Uterus (tissue), 4 donors: ENCODE measurements at regions of chr7 and their contacts with region 1.

Region 1: DNA sequence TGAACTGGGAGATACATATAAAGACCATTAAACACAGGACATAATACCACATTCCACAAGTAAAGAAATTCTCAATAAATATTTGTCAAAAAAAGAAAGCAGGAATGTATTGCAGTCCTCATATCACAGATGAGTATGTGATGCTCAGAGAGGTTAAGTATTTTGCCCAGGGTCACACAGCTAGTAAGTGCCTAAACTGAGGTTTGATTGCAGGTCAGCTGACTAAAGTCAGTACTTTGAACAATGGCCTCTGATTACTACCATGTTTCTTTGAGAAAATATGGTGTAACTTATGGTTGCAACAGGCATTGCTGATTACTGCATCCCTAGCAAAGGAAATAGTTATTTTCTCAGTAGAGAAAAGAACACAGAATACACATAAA is 267.1 kb downstream of the ELMO1 start:
- DNase-seq: no peak
- H3K4me3 ChIP-seq: no peak overlapping the region
- H3K27ac ChIP-seq: no peak overlapping the region
- H3K4me1 ChIP-seq: no peaks in the 10 kb centered on the region
- H3K27me3 ChIP-seq: no peaks in the 10 kb centered on the region
- CTCF ChIP-seq: no peak
- POLR2A ChIP-seq: no peak

Region 2: DNA sequence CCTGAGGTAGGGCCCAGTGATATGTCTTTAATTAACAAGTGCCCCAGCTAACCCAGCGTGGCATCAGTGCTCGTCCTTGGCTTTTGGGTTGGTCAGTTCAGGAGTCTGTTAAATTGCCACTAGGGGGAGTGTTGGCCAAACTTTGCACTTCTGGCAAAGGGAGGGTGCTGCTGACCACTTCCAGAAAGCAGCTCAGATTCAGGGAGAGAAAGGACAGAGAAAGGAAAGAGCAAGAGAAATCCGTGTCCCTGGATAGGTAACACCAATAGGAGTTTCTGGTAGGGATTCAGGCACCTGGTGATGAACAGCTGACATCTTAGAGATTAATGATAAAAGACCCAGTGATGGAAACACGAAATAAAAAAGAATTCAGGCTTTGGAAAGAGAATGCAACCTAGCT is 214.2 kb before region 1 on chr7:
- intact Hi-C with region 1: loop called (anchors 10 kb)
- DNase-seq: peak; percentile 59 to 60
- H3K4me3 ChIP-seq: no peak overlapping the region
- H3K27ac ChIP-seq: no peak overlapping the region
- H3K4me1 ChIP-seq: no peaks in the 10 kb centered on the region
- H3K27me3 ChIP-seq: no peaks in the 10 kb centered on the region
- CTCF ChIP-seq: peak; percentile 71 to 76 (median 74)
- POLR2A ChIP-seq: no peak

Region 3: DNA sequence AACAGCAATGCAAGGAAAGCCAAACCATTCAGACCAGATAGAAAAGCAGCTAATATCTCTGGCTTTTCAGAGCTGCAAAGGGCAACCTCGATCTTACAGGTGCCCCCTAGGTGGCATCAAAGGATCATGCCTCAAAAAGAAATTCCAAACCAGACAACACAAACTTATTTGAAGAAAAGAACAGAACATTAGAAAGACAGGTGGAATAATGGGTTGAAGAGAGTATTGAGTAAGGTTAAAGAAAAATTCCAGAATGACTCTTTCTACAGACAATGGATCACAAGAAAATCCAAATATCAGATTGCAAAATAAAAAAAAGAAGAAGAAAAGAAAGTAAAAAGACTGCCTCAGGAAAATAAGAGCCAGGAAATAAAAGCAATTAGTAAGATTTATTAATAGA is 53.4 kb after region 1 on chr7:
- intact Hi-C with region 1: no loop called
- DNase-seq: no peak
- H3K4me3 ChIP-seq: no peak overlapping the region
- H3K27ac ChIP-seq: no peak overlapping the region
- H3K4me1 ChIP-seq: no peaks in the 10 kb centered on the region
- H3K27me3 ChIP-seq: peaks cover 0 to 6% of the 10 kb centered on the region in 2 donors
- CTCF ChIP-seq: peak; percentile 26 to 50 (median 36)
- POLR2A ChIP-seq: no peak

Region 4: GRCh38 chr7:37320501-37321468 is 139.2 kb after region 1 on chr7:
- intact Hi-C with region 1: no loop called
- DNase-seq: no peak
- H3K4me3 ChIP-seq: no peak overlapping the region
- H3K27ac ChIP-seq: no peak overlapping the region
- H3K4me1 ChIP-seq: no peaks in the 10 kb centered on the region
- H3K27me3 ChIP-seq: no peaks in the 10 kb centered on the region
- CTCF ChIP-seq: no peak
- POLR2A ChIP-seq: no peak

Region 5: DNA sequence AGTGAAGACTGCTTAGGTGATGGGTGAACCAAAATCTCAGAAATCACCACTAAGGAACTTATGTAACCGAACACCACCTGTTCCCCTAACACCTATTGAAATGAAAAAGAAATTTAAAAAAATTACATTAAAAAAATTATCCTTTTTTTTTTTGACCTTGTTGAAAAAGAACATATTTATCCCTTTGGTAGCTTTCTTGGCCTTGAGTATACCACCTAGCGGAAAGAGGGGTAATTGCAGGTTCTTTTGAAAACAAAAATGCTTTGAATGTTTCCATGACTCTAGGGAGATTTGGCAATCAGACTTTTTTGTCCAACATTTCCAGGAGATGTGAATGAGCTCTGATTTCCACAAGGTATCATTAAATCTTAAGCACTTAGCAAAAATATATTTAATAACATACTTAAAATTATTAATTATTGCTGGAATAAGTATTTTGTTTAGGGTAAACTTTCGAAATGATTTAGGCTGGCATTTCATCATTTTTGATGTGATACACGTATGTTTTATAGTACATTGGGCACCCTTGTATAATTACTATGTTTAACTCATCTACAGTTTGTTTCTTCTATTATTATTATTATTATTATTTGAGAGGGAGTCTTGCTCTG is 314.1 kb after region 1 on chr7:
- intact Hi-C with region 1: no loop called
- DNase-seq: no peak
- H3K4me3 ChIP-seq: no peak overlapping the region
- H3K27ac ChIP-seq: no peak overlapping the region
- H3K4me1 ChIP-seq: no peaks in the 10 kb centered on the region
- H3K27me3 ChIP-seq: no peaks in the 10 kb centered on the region
- CTCF ChIP-seq: peak; percentile 45 to 54 (median 51)
- POLR2A ChIP-seq: no peak